Esophagus muscularis mucosa (tissue), 4 donors: ENCODE measurements at regions of chr17 and their contacts with region 1.

Region 1: DNA sequence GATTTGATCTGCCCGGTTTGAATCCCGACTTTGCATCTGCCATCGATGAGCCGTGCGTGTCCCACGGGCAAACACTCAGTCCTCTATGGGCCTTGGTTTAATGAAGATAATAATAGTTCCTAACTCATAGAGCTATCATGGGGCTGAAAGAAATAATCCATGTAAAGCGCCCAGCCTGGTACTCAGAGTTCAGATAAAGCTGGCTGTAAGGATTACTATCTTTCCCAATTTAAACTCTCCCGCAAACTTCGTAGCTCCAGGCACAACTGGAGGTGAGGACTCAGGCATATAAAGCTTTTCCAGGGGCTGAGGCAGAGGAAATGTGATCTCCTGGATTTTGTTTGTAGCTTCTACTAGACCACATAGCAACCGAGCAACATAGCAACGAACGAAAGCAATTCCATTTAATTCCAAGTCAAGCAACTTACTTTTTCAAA is 16.3 kb downstream of the ALOX15 start:
- DNase-seq: no peak
- H3K4me3 ChIP-seq: no peak overlapping the region
- H3K27ac ChIP-seq: peak overlapping the region in 3 of 4 donors; percentile 16 to 50 (median 35)
- H3K4me1 ChIP-seq: peaks cover 4 to 32% (median 18%) of the 10 kb centered on the region in 4 donors
- H3K27me3 ChIP-seq: no peaks in the 10 kb centered on the region
- CTCF ChIP-seq: no peak
- EP300 ChIP-seq: no peak
- POLR2A ChIP-seq: no peak

Region 2: DNA sequence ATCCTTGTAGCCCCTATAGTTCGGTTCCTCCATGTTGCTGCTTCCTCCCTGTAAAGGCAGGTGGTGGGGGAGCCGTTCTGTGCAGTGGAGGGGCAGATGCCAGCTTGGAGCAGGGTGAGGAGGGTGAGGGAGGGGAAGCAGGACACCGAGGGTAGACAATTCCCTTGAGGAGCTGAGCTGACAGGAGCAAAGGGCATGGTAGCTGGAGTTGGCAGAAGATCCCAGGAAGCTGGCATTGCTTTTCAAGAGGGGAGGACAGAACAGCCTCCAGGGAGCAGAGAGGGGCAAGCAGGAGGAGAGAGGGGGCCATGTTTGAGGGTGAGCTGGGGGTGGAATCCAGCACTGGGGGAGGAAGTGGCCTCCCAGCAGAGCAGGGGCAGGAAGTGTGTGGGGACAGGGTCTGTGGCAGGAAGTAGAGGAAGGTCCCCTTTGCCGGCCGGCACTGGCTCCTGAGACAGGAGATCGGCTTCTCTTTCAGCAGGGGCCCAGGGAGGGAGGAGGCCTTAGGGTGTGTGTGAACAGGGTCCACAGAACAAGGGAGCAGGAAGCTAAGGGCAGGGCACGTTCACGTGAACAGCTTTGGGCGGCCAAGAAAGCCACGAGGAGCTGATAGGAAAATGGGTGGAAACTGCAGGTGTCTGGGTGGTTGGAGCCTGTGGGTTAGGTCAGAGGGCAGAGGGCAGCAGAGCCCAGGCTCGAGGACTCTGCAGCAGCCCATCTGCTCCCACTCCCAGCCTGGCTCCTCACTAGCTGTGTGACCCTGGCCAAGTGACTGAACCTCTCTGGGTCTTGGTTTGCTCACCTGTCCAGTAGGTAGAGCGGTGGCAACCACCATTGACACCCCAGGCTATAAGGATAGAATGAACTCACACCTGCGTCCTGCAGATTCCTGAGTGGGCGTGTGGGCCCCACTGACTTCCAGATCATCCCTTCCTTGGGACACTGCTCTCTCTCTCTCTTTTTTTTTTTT is 144.0 kb before region 1 on chr17:
- intact Hi-C with region 1: no loop called
- DNase-seq: no peak
- H3K4me3 ChIP-seq: no peak overlapping the region
- H3K27ac ChIP-seq: no peak overlapping the region
- H3K4me1 ChIP-seq: peaks cover 3 to 16% (median 9%) of the 10 kb centered on the region in 4 donors
- H3K27me3 ChIP-seq: no peaks in the 10 kb centered on the region
- CTCF ChIP-seq: no peak
- EP300 ChIP-seq: no peak
- POLR2A ChIP-seq: no peak

Region 3: GRCh38 chr17:4498461-4499397 is 126.5 kb before region 1 on chr17 and contains the start of gene SPNS2:
- intact Hi-C with region 1: no loop called
- DNase-seq: no peak
- H3K4me3 ChIP-seq: peak within 1 kb of the TSS; percentile 53 to 59 (median 55)
- H3K27ac ChIP-seq: peak within 1 kb of the TSS; percentile 45 to 72 (median 54)
- H3K4me1 ChIP-seq: peaks cover 36 to 45% (median 38%) of the 10 kb centered on the region in 4 donors
- H3K27me3 ChIP-seq: peaks cover 0 to 46% (median 16%) of the 10 kb centered on the region in 4 donors
- CTCF ChIP-seq: no peak
- EP300 ChIP-seq: no peak
- POLR2A ChIP-seq: no peak
- total RNA-seq, gene SPNS2: 10.0 to 19.9 (median 18.8) TPM

Region 4: DNA sequence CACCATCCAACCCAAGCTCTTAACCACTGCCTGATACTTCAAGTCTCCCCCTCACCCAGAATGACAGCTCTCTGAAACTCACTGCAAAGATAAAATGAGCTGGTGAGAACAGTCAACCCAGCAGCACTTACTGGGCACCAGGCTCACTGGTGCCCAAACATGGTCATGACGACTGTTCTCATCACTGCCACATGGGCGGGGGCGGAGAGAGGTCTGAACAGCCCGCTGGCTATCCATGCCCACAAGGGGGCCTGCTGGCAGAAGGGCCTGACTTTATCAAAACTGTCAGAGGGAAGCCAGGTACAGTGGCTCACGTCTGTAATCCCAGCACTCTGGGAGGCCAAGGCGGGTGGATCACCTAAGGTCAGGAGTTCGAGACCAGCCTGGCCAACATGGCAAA is 74.1 kb before region 1 on chr17:
- intact Hi-C with region 1: no loop called
- DNase-seq: no peak
- H3K4me3 ChIP-seq: no peak overlapping the region
- H3K27ac ChIP-seq: no peak overlapping the region
- H3K4me1 ChIP-seq: peaks cover 18 to 21% (median 21%) of the 10 kb centered on the region in 4 donors
- H3K27me3 ChIP-seq: no peaks in the 10 kb centered on the region
- CTCF ChIP-seq: no peak
- EP300 ChIP-seq: no peak
- POLR2A ChIP-seq: no peak

Region 5: DNA sequence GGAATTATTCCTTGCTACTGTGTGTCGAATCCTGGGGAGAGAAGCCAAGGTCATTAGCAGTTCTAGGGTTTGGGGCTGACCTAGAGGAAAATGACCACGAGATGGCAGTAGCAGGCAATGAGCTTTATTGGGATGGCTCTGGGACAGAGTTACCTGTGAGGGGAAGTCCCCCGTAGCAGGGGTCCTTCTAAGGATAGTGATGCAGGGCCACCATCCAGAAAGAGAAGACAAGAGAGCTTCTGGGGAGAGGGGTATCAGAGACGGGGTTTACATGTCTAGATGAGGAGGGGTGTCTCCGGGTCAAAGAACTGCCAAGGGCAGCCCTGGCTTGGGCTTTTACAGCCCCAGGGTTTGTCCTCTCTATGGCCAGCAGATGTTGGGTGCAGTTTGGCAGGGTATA is 58.4 kb before region 1 on chr17:
- intact Hi-C with region 1: loop called (anchors 1 kb)
- DNase-seq: no peak
- H3K4me3 ChIP-seq: no peak overlapping the region
- H3K27ac ChIP-seq: no peak overlapping the region
- H3K4me1 ChIP-seq: peaks cover 11 to 21% (median 16%) of the 10 kb centered on the region in 4 donors
- H3K27me3 ChIP-seq: no peaks in the 10 kb centered on the region
- CTCF ChIP-seq: peak; percentile 72 to 79 (median 78)
- EP300 ChIP-seq: no peak
- POLR2A ChIP-seq: no peak

Region 6: DNA sequence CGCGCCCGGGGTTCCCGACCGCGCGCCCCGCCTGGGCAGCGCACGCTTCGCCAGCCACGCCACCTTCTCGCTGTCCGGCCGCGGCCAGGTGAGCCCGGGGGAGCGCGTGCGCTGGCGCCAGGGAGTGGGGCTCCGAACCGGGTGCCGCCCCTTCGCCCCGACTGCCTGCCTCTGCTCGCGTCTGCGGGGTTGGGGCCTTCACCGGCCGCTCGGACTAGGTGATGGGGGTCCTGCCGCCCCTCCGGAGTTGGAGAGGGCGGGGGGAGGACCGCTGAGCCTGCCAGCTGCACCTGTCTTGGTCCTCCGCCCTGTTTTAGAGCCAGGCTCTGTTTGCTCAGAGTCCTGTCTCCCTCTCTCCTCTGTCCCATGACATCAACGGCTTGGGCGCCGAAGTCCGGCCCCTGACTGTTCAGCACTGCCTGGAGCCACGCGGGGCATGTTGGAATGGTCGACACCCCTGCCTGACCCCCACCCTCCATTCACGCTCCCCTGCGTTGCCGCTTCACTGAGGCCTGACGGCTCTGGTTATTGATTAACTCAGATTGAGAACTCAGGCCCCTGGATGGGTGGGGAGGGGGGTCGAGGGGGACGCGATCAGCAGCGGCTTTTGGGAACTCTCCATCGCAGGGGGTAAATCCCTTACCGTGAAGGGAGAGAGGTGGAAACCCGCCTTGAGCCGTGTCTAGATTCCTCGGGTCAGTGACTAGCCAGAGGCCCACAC is 40.1 kb before region 1 on chr17:
- intact Hi-C with region 1: loop called (anchors 5 kb)
- DNase-seq: no peak
- H3K4me3 ChIP-seq: peak overlapping the region; percentile 63 to 68 (median 66)
- H3K27ac ChIP-seq: peak overlapping the region; percentile 74 to 84 (median 79)
- H3K4me1 ChIP-seq: peaks cover 28 to 37% (median 34%) of the 10 kb centered on the region in 4 donors
- H3K27me3 ChIP-seq: peaks cover 0 to 41% (median 9%) of the 10 kb centered on the region in 4 donors
- CTCF ChIP-seq: no peak
- EP300 ChIP-seq: no peak
- POLR2A ChIP-seq: no peak

Region 7: GRCh38 chr17:4709794-4710692 is 84.8 kb after region 1 on chr17 and contains the start of gene ARRB2:
- intact Hi-C with region 1: no loop called
- DNase-seq: peak; percentile 99
- H3K4me3 ChIP-seq: peak within 1 kb of the TSS; percentile 73 to 84 (median 80)
- H3K27ac ChIP-seq: peak within 1 kb of the TSS; percentile 82 to 89 (median 86)
- H3K4me1 ChIP-seq: peaks cover 17 to 31% (median 27%) of the 10 kb centered on the region in 4 donors
- H3K27me3 ChIP-seq: no peaks in the 10 kb centered on the region
- CTCF ChIP-seq: peak; percentile 67 to 78 (median 76)
- EP300 ChIP-seq: no peak
- POLR2A ChIP-seq: no peak
- total RNA-seq, gene ARRB2: 25.4 to 41.4 (median 31.4) TPM